CD8-positive, alpha-beta memory T cell (primary cell): ENCODE measurements at regions of chr13 and their contacts with region 1.

Region 1: DNA sequence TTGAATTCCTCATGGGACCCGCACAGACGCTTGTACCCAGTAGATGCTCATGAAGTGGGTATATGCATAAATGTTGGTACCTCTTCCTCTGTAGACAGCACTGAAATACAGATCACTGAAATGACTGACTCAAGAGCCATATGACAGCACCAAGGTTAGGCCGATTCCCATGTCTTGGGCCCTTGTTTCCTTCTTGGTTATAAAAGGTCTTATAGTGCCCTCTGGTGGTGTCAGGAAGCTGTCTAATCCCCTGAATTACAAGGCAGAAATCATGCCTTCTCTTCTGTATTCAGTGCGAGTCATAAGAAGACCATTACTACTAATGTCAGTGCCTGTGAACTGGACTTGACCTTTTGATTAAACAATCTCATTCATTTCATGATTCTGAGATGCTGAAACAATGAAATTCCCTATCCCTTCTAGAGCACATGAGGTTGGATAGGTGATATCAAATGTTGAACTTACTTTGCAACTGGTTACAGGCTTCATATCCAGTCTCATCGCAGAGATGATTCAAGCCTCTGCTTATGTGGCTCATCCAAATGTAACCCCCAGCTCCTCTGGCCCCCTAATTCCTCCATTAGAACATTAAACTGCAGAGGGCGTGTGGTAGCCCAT is 59.7 kb downstream of the SPATA13 start:
- DNase-seq: peak in 4 of 5 donors; percentile 39 to 69 (median 64)
- H3K4me3 ChIP-seq: no peak overlapping the region
- H3K4me3 Mint-ChIP-seq: peak overlapping the region in 1 of 7 donors; percentile 18
- H3K27ac ChIP-seq: no peak overlapping the region
- H3K27ac Mint-ChIP-seq: no peak overlapping the region
- H3K4me1 ChIP-seq: peaks cover 16% of the 10 kb centered on the region
- H3K4me1 Mint-ChIP-seq: peaks cover 28 to 46% (median 34%) of the 10 kb centered on the region in 3 donors
- H3K27me3 ChIP-seq: no peaks in the 10 kb centered on the region
- H3K27me3 Mint-ChIP-seq: no peaks in the 10 kb centered on the region

Region 2: DNA sequence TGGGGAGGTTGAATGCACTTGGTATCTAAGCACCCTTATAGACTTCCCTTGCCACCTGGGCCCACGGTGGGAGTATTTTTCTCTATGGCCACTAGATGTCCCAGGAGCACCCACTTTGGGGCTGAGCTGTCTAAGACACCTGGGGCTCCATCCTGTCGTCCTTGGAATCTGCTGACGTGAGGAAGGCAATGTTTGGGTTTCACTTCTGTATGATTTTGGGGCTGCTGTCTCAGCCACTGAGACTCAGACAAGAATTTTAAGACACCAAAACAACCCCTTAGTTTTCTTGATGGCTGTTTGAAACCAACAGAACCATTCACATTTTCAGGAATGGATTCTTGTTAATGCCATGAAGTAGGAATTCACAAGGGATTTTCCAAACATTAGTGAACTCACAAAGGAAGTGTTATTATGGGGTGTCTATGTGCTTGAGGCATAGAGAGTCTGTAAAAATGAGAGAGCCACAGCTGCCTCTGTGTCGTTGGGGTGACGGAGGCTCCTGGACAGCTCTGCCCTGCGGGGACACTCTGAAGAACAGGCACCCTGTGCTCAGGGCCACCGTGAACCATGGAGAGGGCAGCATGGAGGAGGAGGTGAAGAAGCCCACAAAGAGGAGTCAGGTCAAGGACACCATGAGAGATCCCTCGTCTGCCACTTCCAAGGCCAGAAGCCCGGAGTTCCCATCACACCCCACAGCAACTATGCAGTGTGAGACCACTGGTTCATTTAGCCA is 166.5 kb before region 1 on chr13:
- CTCF ChIA-PET with region 1: interaction called, 32 read pairs
- POLR2A ChIA-PET with region 1: no interaction called
- DNase-seq: peak; percentile 34 to 69 (median 41)
- H3K4me3 ChIP-seq: no peak overlapping the region
- H3K4me3 Mint-ChIP-seq: no peak overlapping the region
- H3K27ac ChIP-seq: no peak overlapping the region
- H3K27ac Mint-ChIP-seq: peak overlapping the region in 1 of 8 donors; percentile 39
- H3K4me1 ChIP-seq: no peaks in the 10 kb centered on the region
- H3K4me1 Mint-ChIP-seq: peaks cover 7 to 10% (median 9%) of the 10 kb centered on the region in 3 donors
- H3K27me3 ChIP-seq: no peaks in the 10 kb centered on the region
- H3K27me3 Mint-ChIP-seq: peaks cover 4 to 19% of the 10 kb centered on the region in 2 donors